Activated CD8-positive, alpha-beta memory T cell treated with anti-CD3 and anti-CD28 coated beads, Interleukin-2, amount 10 ng/mL, durations not matched to agents 7 days and 5 days (primary cell): ENCODE measurements at regions of chr16 and their contacts with region 1.

Region 1: GRCh38 chr16:66588981-66589713 is 9.9 kb downstream of the CMTM2 start:
- DNase-seq: peak; percentile 91
- ATAC-seq: peak; percentile 98
- H3K4me3 Mint-ChIP-seq: peak overlapping the region; percentile 73
- H3K27ac Mint-ChIP-seq: peak overlapping the region; percentile 75
- H3K4me1 Mint-ChIP-seq: peaks cover 36% of the 10 kb centered on the region
- H3K27me3 Mint-ChIP-seq: peaks cover 4% of the 10 kb centered on the region

Region 2: GRCh38 chr16:66406534-66407221 is 182.5 kb before region 1 on chr16:
- CTCF ChIA-PET with region 1: interaction called, 63 read pairs
- DNase-seq: peak; percentile 91
- ATAC-seq: peak; percentile 93
- H3K4me3 Mint-ChIP-seq: peak overlapping the region; percentile 78
- H3K27ac Mint-ChIP-seq: peak overlapping the region; percentile 8
- H3K4me1 Mint-ChIP-seq: peaks cover 23% of the 10 kb centered on the region
- H3K27me3 Mint-ChIP-seq: peaks cover 14% of the 10 kb centered on the region

Region 3: GRCh38 chr16:66483689-66484481 is 105.3 kb before region 1 on chr16:
- CTCF ChIA-PET with region 1: interaction called, 42 read pairs
- DNase-seq: peak; percentile 86
- ATAC-seq: peak; percentile 85
- H3K4me3 Mint-ChIP-seq: no peak overlapping the region
- H3K27ac Mint-ChIP-seq: no peak overlapping the region
- H3K4me1 Mint-ChIP-seq: peaks cover 29% of the 10 kb centered on the region
- H3K27me3 Mint-ChIP-seq: no peaks in the 10 kb centered on the region

Region 4: GRCh38 chr16:66516808-66517585 is 72.2 kb before region 1 on chr16:
- CTCF ChIA-PET with region 1: interaction called, 20 read pairs
- DNase-seq: peak; percentile 96
- ATAC-seq: peak; percentile 88
- H3K4me3 Mint-ChIP-seq: peak overlapping the region; percentile 83
- H3K27ac Mint-ChIP-seq: peak overlapping the region; percentile 99
- H3K4me1 Mint-ChIP-seq: peaks cover 66% of the 10 kb centered on the region
- H3K27me3 Mint-ChIP-seq: no peaks in the 10 kb centered on the region

Region 5: GRCh38 chr16:66552286-66553177 is 36.6 kb before region 1 on chr16 and contains the start of gene CKLF:
- CTCF ChIA-PET with region 1: interaction called, 37 read pairs
- DNase-seq: peak; percentile 94
- ATAC-seq: peak; percentile 74
- H3K4me3 Mint-ChIP-seq: peak within 1 kb of the TSS; percentile 98
- H3K27ac Mint-ChIP-seq: peak within 1 kb of the TSS; percentile 96
- H3K4me1 Mint-ChIP-seq: peaks cover 80% of the 10 kb centered on the region
- H3K27me3 Mint-ChIP-seq: no peaks in the 10 kb centered on the region
- total RNA-seq, gene CKLF: 199 to 220 TPM

Region 6: GRCh38 chr16:66569827-66570405 is 19.2 kb before region 1 on chr16:
- CTCF ChIA-PET with region 1: interaction called, 59 read pairs
- DNase-seq: no peak
- ATAC-seq: no peak
- H3K4me3 Mint-ChIP-seq: no peak overlapping the region
- H3K27ac Mint-ChIP-seq: no peak overlapping the region
- H3K4me1 Mint-ChIP-seq: peaks cover 24% of the 10 kb centered on the region
- H3K27me3 Mint-ChIP-seq: no peaks in the 10 kb centered on the region

Region 7: DNA sequence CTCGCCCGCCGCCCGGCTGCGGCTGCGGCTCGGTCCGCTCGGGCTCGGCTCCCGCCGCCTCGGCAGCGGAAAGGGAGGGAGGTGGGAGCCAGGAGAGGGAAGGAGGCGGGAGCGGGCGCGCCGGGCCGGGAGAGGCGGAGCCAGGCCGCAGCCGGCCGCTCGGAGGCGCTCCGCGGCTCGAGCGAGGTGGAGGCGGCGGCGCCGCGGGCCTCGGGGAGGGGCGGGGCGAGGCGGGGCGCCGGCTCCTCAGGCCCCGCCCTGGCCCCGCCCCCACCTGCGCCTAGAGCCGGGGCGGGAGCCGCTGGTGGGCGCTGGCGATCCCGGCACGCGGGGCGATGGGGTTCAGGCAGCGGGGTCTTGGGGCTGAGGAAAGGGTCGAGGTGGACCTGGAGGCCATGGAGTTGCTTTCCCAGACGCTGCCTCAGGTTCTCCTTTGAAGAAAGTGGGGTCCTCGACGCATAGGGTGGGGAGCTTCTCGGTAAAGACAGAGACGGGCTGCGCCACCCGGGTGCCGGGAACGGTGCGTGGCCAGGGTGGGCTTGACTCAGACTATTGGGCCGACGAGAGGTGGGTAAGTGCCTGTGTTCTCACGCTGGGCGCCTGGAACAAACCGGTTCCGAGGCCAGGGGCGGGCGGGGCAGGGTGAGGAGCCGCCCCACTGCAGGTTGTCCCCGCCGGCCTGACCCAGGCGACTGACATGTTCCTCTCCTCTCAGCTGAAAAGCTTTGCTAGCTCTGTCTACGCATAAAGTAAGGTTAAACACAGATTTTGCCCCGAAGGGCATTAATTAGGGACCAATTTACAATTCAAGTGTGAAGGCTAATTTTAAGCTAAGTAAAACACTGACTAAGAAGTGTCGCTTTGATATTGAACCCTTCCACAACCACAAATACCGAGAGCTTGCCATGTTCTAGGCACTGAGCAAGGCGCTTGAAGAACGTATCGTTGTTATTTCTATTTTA is 107.8 kb after region 1 on chr16 and contains the start of gene CMTM4:
- CTCF ChIA-PET with region 1: no interaction called
- DNase-seq: peak; percentile 70
- ATAC-seq: peak; percentile 94
- H3K4me3 Mint-ChIP-seq: peak within 1 kb of the TSS; percentile 73
- H3K27ac Mint-ChIP-seq: no peak within 1 kb of the TSS
- H3K4me1 Mint-ChIP-seq: peaks cover 15% of the 10 kb centered on the region
- H3K27me3 Mint-ChIP-seq: peaks cover 47% of the 10 kb centered on the region
- total RNA-seq, gene CMTM4: 1.1 to 1.2 TPM